Esophagus muscularis mucosa (tissue), 4 donors: ENCODE measurements at regions of chr9 and their contacts with region 1.

Region 1: DNA sequence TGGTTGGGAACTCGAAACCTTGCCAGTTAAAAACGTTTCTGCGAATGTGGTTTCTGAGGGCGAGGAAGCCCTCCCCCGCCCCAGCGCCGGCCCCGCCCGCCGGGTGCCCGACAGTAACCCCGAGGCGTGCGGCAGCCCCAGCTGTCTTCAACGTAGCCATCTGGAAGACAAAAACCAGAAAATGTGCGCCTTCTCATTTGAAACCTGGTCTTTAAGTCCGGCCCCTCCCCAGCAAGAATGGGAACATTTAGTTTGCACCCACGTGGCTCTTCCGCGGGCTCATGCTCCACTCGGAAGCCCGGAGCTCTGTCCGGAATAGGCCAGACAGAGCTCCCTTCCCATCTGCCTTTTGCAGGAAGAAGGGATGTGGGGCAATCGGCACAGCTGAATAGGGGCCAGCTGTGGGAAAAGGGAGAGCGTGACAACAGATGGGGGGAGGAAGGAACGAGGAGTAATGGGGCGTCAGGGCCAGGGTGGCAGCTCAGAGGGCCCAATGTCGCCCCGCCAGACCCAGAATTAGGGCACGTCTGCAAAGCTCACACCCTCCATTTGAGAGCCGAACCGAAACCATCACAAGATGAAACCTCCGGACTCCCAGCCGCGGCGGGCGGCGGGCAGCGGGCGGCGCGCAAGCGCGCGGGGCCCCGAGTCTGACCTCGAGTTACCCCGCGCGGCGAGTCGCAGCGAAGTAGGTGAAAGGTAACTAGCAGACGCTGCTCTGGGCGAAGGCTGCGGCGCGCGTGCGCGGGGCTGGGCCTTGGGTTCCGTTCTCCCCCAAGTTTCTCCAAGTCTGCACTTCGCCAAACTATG is 63.4 kb upstream of the ABCA1 start:
- DNase-seq: peak; percentile 97
- H3K4me3 ChIP-seq: peak overlapping the region; percentile 63 to 81 (median 74)
- H3K27ac ChIP-seq: peak overlapping the region; percentile 93 to 98 (median 96)
- H3K4me1 ChIP-seq: peaks cover 37 to 48% (median 46%) of the 10 kb centered on the region in 4 donors
- H3K27me3 ChIP-seq: no peaks in the 10 kb centered on the region
- CTCF ChIP-seq: no peak
- EP300 ChIP-seq: peak; percentile 26
- POLR2A ChIP-seq: peak; percentile 19

Region 2: GRCh38 chr9:104863180-104863883 is 128.0 kb before region 1 on chr9:
- intact Hi-C with region 1: no loop called
- DNase-seq: no peak
- H3K4me3 ChIP-seq: no peak overlapping the region
- H3K27ac ChIP-seq: peak overlapping the region; percentile 7 to 56 (median 26)
- H3K4me1 ChIP-seq: peaks cover 20 to 66% (median 59%) of the 10 kb centered on the region in 4 donors
- H3K27me3 ChIP-seq: no peaks in the 10 kb centered on the region
- CTCF ChIP-seq: peak; percentile 55 to 82 (median 63)
- EP300 ChIP-seq: no peak
- POLR2A ChIP-seq: no peak

Region 3: GRCh38 chr9:105076729-105077128 is 85.4 kb after region 1 on chr9:
- intact Hi-C with region 1: no loop called
- DNase-seq: no peak
- H3K4me3 ChIP-seq: no peak overlapping the region
- H3K27ac ChIP-seq: no peak overlapping the region
- H3K4me1 ChIP-seq: peaks cover 0 to 5% (median 0%) of the 10 kb centered on the region in 4 donors
- H3K27me3 ChIP-seq: no peaks in the 10 kb centered on the region
- CTCF ChIP-seq: no peak
- EP300 ChIP-seq: no peak
- POLR2A ChIP-seq: no peak

Region 4: DNA sequence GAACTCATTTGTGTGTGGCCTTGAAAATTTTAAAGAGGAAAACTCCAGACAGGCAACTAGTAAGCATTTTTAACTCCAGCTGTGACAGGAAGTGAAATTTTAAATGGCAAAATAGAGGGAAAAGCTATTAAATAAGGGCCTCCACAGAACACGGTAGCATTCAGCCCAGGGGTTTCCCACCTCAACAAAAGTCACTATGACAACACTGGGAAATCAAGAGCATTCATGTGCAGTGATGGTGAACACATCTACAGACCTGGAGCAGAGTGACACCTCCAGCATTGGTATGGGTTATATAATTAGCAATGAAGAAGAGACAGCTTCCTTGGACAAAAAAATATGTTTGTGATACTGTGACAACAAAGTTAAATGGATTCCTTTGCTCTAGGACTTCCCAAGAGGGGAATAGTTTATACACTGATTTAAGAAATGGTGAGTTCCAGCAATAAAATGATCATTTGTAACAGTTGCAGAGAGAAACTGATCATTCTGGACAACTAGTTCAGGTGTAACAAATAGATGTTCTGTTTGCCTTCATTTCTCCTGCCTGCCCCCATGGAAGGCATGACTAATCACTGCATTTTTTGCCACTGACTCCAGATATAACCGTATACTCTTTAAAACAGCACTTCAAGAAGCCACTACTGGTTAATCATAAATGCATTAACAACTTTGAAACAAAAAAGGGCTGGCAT is 159.8 kb after region 1 on chr9:
- intact Hi-C with region 1: loop called (anchors 5 kb)
- DNase-seq: no peak
- H3K4me3 ChIP-seq: no peak overlapping the region
- H3K27ac ChIP-seq: no peak overlapping the region
- H3K4me1 ChIP-seq: peaks cover 0 to 26% (median 24%) of the 10 kb centered on the region in 4 donors
- H3K27me3 ChIP-seq: no peaks in the 10 kb centered on the region
- CTCF ChIP-seq: no peak
- EP300 ChIP-seq: no peak
- POLR2A ChIP-seq: no peak